Left cardiac atrium (tissue), 4 donors: ENCODE measurements at regions of chr2 and their contacts with region 1.

Region 1: DNA sequence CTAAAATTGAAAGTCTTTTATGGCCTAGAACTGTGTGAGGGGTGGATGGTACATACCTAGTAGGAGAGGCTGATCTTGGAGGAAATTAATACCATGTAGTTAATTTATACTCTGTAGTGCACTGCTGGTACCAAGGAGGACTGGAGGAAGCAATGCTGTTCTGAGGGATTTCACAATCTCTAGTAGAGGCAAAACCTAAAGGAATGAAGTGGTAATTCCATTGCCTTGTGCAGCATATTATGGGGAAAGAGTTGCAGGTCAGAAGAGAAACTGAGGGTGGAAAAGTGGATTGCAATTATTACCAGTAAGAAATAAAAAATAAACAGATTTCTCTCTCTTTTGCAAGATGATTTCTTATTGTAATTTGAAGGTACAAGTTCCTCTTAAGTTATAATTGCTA is 2.2 kb downstream of the ABI2 start:
- DNase-seq: no peak
- ATAC-seq: no peak

Region 2: DNA sequence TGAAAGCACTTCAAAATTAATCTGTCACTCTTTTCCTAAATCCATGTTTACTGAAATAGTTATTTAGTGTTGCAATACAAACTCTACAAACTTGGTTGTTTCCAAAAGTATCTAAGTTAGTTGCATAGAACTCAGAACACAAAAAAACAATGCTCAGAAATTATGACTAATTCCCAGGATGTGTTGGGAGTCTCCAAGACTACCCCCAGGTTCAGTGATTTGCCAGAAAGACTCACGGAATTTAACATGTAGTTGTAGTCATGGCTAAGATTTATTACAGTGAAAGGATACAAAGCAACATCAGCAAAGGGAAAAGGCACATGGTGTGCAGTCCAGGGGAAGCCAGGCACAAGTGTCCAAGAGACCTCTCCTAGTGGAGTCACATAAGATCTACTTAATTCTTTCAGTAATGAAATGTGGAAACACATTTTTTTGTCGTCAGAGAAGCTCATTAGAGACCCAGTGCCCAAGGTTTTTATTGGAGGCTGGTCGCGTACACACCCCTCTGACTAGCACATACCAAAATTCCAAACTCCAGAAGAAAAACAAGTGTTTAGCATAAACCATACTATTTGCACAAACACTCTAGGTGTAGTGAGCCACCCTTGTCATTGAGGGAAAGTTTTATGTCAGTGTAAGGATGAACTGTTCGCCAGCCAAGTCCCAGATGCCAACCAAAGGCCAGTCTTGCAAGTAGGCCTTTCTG is 134.9 kb before region 1 on chr2:
- intact Hi-C with region 1: no loop called
- DNase-seq: no peak
- ATAC-seq: no peak

Region 3: DNA sequence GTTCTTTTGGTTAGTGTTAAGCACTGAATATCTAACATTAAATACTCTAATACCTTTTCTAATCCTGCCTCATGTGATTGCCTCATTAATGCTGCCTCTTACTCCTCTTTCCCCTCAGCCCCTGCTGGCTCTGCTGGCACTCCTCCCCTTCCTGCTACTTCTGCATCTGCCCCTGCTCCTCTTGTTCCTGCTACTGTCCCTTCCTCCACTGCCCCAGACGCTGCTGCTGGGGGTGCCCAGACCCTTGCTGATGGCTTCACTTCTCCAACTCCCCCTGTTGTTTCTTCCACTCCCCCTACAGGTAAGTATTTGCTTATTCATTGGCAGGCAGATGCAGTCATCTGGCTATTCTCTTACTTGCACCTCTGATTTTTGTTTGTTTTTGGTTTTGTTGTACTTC is 66.2 kb after region 1 on chr2:
- intact Hi-C with region 1: loop called in 1 of 2 experiments (anchors 10 kb)
- DNase-seq: no peak
- ATAC-seq: peak in 1 of 2 donors; percentile 38

Region 4: GRCh38 chr2:203706403-203706802 is 376.0 kb after region 1 on chr2 and contains the start of gene CD28:
- intact Hi-C with region 1: no loop called
- DNase-seq: peak; percentile 36
- ATAC-seq: peak; percentile 67 to 88
- total RNA-seq, gene CD28: 2.5 to 2.9 TPM